ENCODE measurements at regions of chr17 and their contacts with region 1.

Region 1: DNA sequence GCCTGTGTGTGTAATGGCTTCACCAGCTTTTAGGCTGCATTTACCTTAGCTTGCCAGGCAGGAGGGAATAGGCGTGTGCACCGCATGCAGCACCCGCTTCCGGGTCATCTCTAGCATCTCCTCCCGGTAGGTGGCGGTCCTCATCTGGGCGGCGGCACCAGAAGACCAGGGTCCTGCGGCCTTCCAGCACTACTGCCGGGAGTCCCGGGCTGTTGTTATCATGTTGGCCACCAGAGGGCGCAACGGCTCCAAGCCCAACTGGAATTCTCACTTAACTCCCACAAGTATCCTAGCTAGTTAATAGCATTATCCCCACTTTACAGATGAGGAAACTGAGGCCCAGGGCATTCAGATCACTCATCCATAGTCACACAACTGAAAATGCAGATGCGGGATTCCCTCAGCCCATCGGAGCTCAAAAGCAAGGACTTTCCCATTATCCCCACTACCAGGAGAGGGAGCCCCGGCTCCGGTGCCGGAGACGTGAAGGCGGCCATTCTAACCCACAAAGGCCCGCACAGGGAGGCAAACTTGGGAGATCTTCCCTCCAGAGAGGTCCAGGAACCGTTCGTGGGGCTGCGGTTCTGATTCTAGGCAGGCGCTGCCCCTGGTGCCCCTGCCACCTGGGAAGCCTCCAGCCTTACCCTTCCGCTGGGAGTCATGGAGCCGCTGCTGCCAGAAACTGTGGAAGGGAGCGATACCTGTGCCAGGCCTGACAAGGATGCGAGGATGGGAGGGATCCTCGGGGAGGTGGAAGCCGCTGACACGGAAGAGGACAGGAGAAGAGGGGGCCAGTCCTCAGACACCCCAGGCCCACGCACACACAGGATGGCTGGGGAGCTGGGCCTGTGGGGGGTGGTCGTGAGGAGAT is 23.9 kb downstream of the LGALS9 start:
- DNase-seq: peak; percentile 79
- ATAC-seq: peak; percentile 88
- H3K4me3 Mint-ChIP-seq: no peak overlapping the region
- H3K27ac Mint-ChIP-seq: no peak overlapping the region
- H3K4me1 Mint-ChIP-seq: peaks cover 13% of the 10 kb centered on the region
- H3K27me3 Mint-ChIP-seq: no peaks in the 10 kb centered on the region

Region 2: DNA sequence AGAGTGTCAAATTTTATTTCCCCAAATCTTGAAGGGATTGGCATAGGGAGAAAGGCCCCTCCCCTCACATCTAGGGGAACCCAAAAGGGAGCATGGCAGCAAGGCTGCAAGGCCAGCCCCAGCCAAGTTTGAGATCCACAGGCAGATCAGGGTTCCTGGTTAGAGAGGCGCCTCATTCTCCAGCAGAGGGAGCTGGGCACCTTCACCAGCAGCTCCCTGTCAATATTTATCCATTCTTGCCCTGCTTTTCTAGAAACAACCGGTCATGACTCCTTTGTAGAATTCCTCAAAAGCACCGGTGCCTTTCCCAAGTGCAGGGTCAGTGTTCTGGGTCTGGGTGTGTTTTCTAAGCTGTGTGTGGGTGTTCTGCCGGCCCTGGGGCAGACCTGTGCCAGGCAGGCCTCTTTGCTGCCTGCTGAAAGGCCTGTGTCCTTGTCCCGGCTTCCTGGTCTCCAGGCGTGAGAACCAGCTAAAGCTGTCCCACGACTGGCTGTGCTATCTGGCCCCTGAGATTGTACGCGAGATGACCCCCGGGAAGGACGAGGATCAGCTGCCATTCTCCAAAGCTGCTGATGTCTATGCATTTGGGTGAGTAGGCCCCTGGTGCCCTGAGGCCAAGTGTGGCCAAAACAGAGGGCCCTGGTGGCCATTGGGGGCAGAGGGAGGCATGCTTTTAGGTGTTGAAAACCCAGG is 45.1 kb before region 1 on chr17:
- CTCF ChIA-PET with region 1: interaction called, 281 read pairs
- POLR2A ChIA-PET with region 1: interaction called, 13 read pairs
- DNase-seq: peak; percentile 53
- ATAC-seq: peak; percentile 67
- H3K4me3 Mint-ChIP-seq: no peak overlapping the region
- H3K27ac Mint-ChIP-seq: no peak overlapping the region
- H3K4me1 Mint-ChIP-seq: peaks cover 2% of the 10 kb centered on the region
- H3K27me3 Mint-ChIP-seq: no peaks in the 10 kb centered on the region

Region 3: GRCh38 chr17:27635275-27635823 is 19.5 kb before region 1 on chr17:
- CTCF ChIA-PET with region 1: interaction called, 16 read pairs
- POLR2A ChIA-PET with region 1: interaction called, 3 read pairs
- DNase-seq: no peak
- ATAC-seq: no peak
- H3K4me3 Mint-ChIP-seq: no peak overlapping the region
- H3K27ac Mint-ChIP-seq: no peak overlapping the region
- H3K4me1 Mint-ChIP-seq: peaks cover 44% of the 10 kb centered on the region
- H3K27me3 Mint-ChIP-seq: no peaks in the 10 kb centered on the region

Region 4: DNA sequence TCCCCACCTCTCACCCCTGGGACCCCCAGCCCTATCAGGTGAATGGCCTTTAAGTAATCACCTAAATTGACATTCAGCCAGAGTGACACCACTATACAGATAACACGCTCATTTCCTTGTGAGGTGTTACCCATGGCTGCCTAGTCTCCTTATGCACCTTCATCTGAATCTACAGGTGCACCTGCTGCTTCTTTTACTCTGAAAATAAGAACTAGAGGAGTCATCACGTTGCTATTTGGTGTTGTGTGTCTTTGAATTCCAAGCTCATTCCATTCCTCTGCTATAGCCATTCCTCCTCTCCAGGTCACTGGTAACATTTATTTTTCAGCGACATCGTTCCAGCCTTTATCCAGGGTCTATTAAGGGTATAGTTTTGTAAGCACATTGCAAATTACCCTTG is 14.1 kb before region 1 on chr17:
- CTCF ChIA-PET with region 1: interaction called, 10 read pairs
- POLR2A ChIA-PET with region 1: no interaction called
- DNase-seq: no peak
- ATAC-seq: no peak
- H3K4me3 Mint-ChIP-seq: no peak overlapping the region
- H3K27ac Mint-ChIP-seq: no peak overlapping the region
- H3K4me1 Mint-ChIP-seq: peaks cover 5% of the 10 kb centered on the region
- H3K27me3 Mint-ChIP-seq: no peaks in the 10 kb centered on the region

Region 5: GRCh38 chr17:27666831-27667560 is 12.1 kb after region 1 on chr17:
- CTCF ChIA-PET with region 1: interaction called, 11 read pairs
- POLR2A ChIA-PET with region 1: no interaction called
- DNase-seq: no peak
- ATAC-seq: no peak
- H3K4me3 Mint-ChIP-seq: no peak overlapping the region
- H3K27ac Mint-ChIP-seq: no peak overlapping the region
- H3K4me1 Mint-ChIP-seq: no peaks in the 10 kb centered on the region
- H3K27me3 Mint-ChIP-seq: no peaks in the 10 kb centered on the region

Region 6: DNA sequence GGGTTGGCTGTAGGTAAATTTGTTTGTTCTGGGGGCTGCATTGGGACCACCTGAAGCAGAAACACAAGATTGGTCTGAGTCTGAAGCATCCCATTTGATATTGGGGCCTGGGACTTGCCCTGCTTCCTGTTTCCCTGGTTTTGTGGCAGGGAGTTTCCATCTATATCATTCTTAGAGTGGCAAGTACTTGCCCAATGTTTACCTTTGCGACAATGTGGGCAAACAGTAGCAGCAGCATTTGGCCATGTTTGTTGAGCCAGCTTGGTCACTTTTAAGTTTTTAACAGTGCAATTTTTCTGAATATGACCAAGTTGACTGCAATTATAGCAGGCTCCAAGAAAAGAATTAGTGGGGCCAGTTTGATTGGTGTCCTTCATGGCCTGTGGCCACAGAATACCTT is 37.9 kb after region 1 on chr17:
- CTCF ChIA-PET with region 1: no interaction called
- POLR2A ChIA-PET with region 1: no interaction called
- DNase-seq: no peak
- ATAC-seq: no peak
- H3K4me3 Mint-ChIP-seq: no peak overlapping the region
- H3K27ac Mint-ChIP-seq: no peak overlapping the region
- H3K4me1 Mint-ChIP-seq: no peaks in the 10 kb centered on the region
- H3K27me3 Mint-ChIP-seq: peaks cover 4% of the 10 kb centered on the region

Region 7: GRCh38 chr17:27760069-27760885 is 105.4 kb after region 1 on chr17:
- CTCF ChIA-PET with region 1: interaction called, 45 read pairs
- POLR2A ChIA-PET with region 1: no interaction called
- DNase-seq: peak; percentile 73
- ATAC-seq: peak; percentile 59
- H3K4me3 Mint-ChIP-seq: no peak overlapping the region
- H3K27ac Mint-ChIP-seq: no peak overlapping the region
- H3K4me1 Mint-ChIP-seq: no peaks in the 10 kb centered on the region
- H3K27me3 Mint-ChIP-seq: no peaks in the 10 kb centered on the region

Region 8: GRCh38 chr17:27879987-27880608 is 225.2 kb after region 1 on chr17:
- CTCF ChIA-PET with region 1: interaction called, 11 read pairs
- POLR2A ChIA-PET with region 1: no interaction called
- DNase-seq: peak; percentile 81
- ATAC-seq: peak; percentile 90
- H3K4me3 Mint-ChIP-seq: no peak overlapping the region
- H3K27ac Mint-ChIP-seq: peak overlapping the region; percentile 55
- H3K4me1 Mint-ChIP-seq: peaks cover 32% of the 10 kb centered on the region
- H3K27me3 Mint-ChIP-seq: no peaks in the 10 kb centered on the region